Activated B cell treated with CpG ODN at 0.5 μM for 24 hours (primary cell): ENCODE measurements at regions of chr1 and their contacts with region 1.

Region 1: GRCh38 chr1:50959913-50960844 is at the start of gene FAF1:
- DNase-seq: peak; percentile 98
- ATAC-seq: peak; percentile 90
- H3K4me3 Mint-ChIP-seq: peak within 1 kb of the TSS; percentile 93
- H3K27ac Mint-ChIP-seq: peak within 1 kb of the TSS; percentile 95
- H3K4me1 Mint-ChIP-seq: peaks cover 23% of the 10 kb centered on the region
- H3K27me3 Mint-ChIP-seq: no peaks in the 10 kb centered on the region
- CTCF ChIP-seq: no peak
- total RNA-seq, gene FAF1: 57.2 and 61.7 TPM in 2 replicates

Region 2: GRCh38 chr1:49576327-49576901 is 1383.8 kb before region 1 on chr1:
- CTCF ChIA-PET with region 1: no interaction called
- POLR2A ChIA-PET with region 1: no interaction called
- intact Hi-C with region 1: no loop called
- DNase-seq: no peak
- ATAC-seq: no peak
- H3K4me3 Mint-ChIP-seq: no peak overlapping the region
- H3K27ac Mint-ChIP-seq: no peak overlapping the region
- H3K4me1 Mint-ChIP-seq: no peaks in the 10 kb centered on the region
- H3K27me3 Mint-ChIP-seq: no peaks in the 10 kb centered on the region
- CTCF ChIP-seq: no peak

Region 3: GRCh38 chr1:50822035-50822776 is 138.0 kb before region 1 on chr1:
- CTCF ChIA-PET with region 1: no interaction called
- POLR2A ChIA-PET with region 1: no interaction called
- intact Hi-C with region 1: no loop called
- DNase-seq: no peak
- ATAC-seq: no peak
- H3K4me3 Mint-ChIP-seq: no peak overlapping the region
- H3K27ac Mint-ChIP-seq: no peak overlapping the region
- H3K4me1 Mint-ChIP-seq: peaks cover 7% of the 10 kb centered on the region
- H3K27me3 Mint-ChIP-seq: no peaks in the 10 kb centered on the region
- CTCF ChIP-seq: no peak

Region 4: GRCh38 chr1:50880373-50880772 is 79.8 kb before region 1 on chr1:
- CTCF ChIA-PET with region 1: no interaction called
- POLR2A ChIA-PET with region 1: no interaction called
- intact Hi-C with region 1: no loop called
- DNase-seq: no peak
- ATAC-seq: no peak
- H3K4me3 Mint-ChIP-seq: no peak overlapping the region
- H3K27ac Mint-ChIP-seq: no peak overlapping the region
- H3K4me1 Mint-ChIP-seq: peaks cover 8% of the 10 kb centered on the region
- H3K27me3 Mint-ChIP-seq: no peaks in the 10 kb centered on the region
- CTCF ChIP-seq: no peak

Region 5: DNA sequence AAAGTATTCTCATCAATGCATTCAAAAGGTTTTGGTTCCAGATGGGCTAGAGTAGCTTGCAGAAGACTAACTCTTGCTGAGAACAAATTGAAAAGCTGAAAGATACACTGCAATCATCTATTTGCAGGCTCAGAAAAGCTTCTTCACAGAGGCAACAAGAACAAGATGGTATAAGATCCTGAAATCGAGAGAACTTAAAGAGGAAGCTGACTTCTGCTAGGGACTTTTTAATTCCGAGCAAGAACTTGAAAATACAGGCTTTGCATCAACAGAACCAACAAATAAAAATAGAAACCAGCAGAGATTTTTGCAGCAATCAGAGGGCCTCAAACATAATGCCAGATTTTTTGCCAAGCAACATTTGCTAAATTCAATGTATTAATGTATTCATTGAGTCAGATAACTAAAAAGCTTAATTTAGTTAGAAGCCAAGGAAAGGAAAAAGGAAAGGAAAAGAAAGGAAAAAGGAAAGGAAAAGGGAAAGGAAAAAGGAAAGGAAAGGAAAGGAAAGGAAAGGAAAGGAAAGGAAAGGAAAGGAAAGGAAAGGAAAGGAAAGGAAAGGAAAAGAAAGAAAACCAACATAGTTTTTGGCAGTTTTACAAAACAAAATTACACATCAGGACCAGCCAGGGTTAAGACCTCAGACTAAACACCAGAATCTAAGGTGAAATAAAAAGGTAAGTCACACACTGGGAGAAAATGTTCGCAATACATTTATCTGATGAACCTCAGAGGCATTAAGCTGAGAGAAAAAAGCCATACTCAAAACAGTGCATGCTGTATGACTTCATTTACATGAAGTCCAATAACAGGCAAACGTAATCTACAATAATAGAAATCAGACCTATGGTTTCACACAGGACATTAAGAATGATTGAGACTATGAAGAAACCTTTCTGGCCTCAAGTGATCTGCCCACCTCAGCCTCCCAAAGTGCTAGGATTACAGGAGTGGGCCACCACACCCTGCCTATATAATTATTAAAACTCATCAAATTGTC is 42.7 kb before region 1 on chr1:
- CTCF ChIA-PET with region 1: interaction called, 3 read pairs
- POLR2A ChIA-PET with region 1: interaction called, 13 read pairs
- intact Hi-C with region 1: no loop called
- DNase-seq: no peak
- ATAC-seq: peak; percentile 45
- H3K4me3 Mint-ChIP-seq: peak overlapping the region; percentile 76
- H3K27ac Mint-ChIP-seq: peak overlapping the region; percentile 92
- H3K4me1 Mint-ChIP-seq: peaks cover 24% of the 10 kb centered on the region
- H3K27me3 Mint-ChIP-seq: no peaks in the 10 kb centered on the region
- CTCF ChIP-seq: no peak

Region 6: GRCh38 chr1:50978144-50978851 is 18.1 kb after region 1 on chr1:
- CTCF ChIA-PET with region 1: no interaction called
- POLR2A ChIA-PET with region 1: interaction called, 21 read pairs
- intact Hi-C with region 1: no loop called
- DNase-seq: peak; percentile 52
- ATAC-seq: peak; percentile 29
- H3K4me3 Mint-ChIP-seq: peak overlapping the region; percentile 80
- H3K27ac Mint-ChIP-seq: peak overlapping the region; percentile 68
- H3K4me1 Mint-ChIP-seq: peaks cover 22% of the 10 kb centered on the region
- H3K27me3 Mint-ChIP-seq: peaks cover 18% of the 10 kb centered on the region
- CTCF ChIP-seq: no peak

Region 7: GRCh38 chr1:51093581-51093980 is 133.4 kb after region 1 on chr1:
- CTCF ChIA-PET with region 1: no interaction called
- POLR2A ChIA-PET with region 1: no interaction called
- intact Hi-C with region 1: no loop called
- DNase-seq: no peak
- ATAC-seq: no peak
- H3K4me3 Mint-ChIP-seq: no peak overlapping the region
- H3K27ac Mint-ChIP-seq: no peak overlapping the region
- H3K4me1 Mint-ChIP-seq: no peaks in the 10 kb centered on the region
- H3K27me3 Mint-ChIP-seq: peaks cover 45% of the 10 kb centered on the region
- CTCF ChIP-seq: no peak

Region 8: GRCh38 chr1:51235673-51236530 is 275.7 kb after region 1 on chr1 and contains the start of gene RNF11:
- CTCF ChIA-PET with region 1: no interaction called
- POLR2A ChIA-PET with region 1: no interaction called
- intact Hi-C with region 1: loop called (anchors 1 kb)
- DNase-seq: peak; percentile 94
- ATAC-seq: peak; percentile 74
- H3K4me3 Mint-ChIP-seq: peak within 1 kb of the TSS; percentile 92
- H3K27ac Mint-ChIP-seq: peak within 1 kb of the TSS; percentile 93
- H3K4me1 Mint-ChIP-seq: peaks cover 24% of the 10 kb centered on the region
- H3K27me3 Mint-ChIP-seq: peaks cover 4% of the 10 kb centered on the region
- CTCF ChIP-seq: no peak
- total RNA-seq, gene RNF11: 15.3 and 17.1 TPM in 2 replicates